HepG2 (cell line): ENCODE measurements at regions of chr2 and their contacts with region 1.

Region 1: DNA sequence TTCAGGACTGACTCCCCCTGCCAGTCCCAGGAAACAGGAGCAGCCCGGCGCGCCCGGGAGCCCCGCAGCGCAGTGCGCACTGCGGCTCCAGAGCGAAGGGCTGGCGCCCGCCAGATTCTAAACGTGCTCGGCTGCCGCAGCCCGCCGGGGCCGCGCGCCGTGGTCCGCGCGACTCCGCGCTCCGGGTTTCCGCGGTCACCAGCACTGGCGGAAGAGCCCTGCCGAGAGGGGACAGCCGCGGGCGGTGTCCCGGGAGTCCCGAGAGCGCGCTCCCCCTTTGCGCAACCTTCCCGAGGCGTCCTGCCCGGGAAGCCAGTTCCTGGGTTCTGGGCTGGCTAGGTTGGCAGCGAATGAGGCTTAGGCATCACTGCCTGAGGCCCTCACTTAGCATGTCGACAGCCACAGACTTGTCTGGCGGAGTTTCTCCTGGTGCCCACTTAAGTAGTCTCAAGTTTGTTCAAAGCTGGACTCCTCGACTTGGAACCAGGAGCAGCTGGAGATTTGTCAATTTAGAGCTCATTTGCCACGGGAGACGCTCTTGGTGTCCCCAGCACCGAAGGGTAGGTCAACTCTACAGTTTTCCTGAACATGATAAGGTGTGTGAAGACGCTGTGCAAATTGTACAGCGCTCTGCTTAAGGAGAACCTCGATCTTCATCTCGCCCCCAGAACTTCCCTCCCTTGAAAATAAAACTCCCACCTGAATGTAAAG is 1.5 kb upstream of the VSNL1 start:
- DNase-seq: peak; percentile 83
- ATAC-seq: peak; percentile 80
- H3K4me3 ChIP-seq: peak overlapping the region; percentile 78 to 97 (median 83)
- H3K27ac ChIP-seq: peak overlapping the region; percentile 94
- H3K4me1 ChIP-seq: peaks cover 31% of the 10 kb centered on the region
- H3K27me3 ChIP-seq: peaks cover 0 to 3% of the 10 kb centered on the region in 2 experiments; a peak in 1 of 5 replicates
- CTCF ChIP-seq: peak; percentile 48
- EP300 ChIP-seq: 0 out of 4 replicates have a peak, but pooled peaks of 1 of the 2 experiments have one; percentile 18
- POLR2A ChIP-seq: peak; percentile 77 to 88
- RAD21 ChIP-seq: peak; percentile 82

Region 2: GRCh38 chr2:17479875-17480274 is 59.1 kb before region 1 on chr2:
- CTCF ChIA-PET with region 1: no interaction called
- POLR2A ChIA-PET with region 1: interaction called, 32 read pairs
- in situ Hi-C with region 1: no loop called
- intact Hi-C with region 1: loop called (anchors 1 kb)
- DNase-seq: peak; percentile 96
- ATAC-seq: peak; percentile 99
- H3K4me3 ChIP-seq: peak overlapping the region in 1 of 3 experiments; percentile 34; a peak in 1 of 6 replicates
- H3K27ac ChIP-seq: peak overlapping the region; percentile 61
- H3K4me1 ChIP-seq: peaks cover 47% of the 10 kb centered on the region
- H3K27me3 ChIP-seq: no peaks in the 10 kb centered on the region
- CTCF ChIP-seq: no peak
- EP300 ChIP-seq: peak in 1 of 2 experiments; percentile 95; a peak in 2 of 4 replicates
- POLR2A ChIP-seq: no peak
- RAD21 ChIP-seq: no peak

Region 3: DNA sequence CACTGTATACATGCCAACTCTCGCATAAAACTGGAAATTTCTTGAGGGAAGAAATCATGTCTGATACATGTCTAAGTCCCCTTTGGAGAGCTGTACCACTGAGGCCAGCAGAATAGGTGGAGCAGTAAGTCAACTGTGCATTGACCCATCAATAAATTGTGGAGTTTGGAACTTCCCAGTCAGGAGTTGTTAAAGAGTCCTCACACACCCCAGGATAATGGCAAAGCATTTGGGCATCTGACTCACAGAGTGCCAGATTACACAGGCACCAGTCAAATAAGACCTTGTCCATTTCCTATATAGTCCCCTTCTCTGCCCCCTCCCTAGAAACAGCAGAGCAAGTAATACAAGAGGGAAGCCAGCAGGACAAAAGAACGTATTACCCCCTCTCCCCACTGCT is 11.9 kb after region 1 on chr2:
- CTCF ChIA-PET with region 1: no interaction called
- POLR2A ChIA-PET with region 1: interaction called, 19 read pairs
- in situ Hi-C with region 1: no loop called
- intact Hi-C with region 1: no loop called
- DNase-seq: no peak
- ATAC-seq: no peak
- H3K4me3 ChIP-seq: no peak overlapping the region
- H3K27ac ChIP-seq: peak overlapping the region; percentile 2
- H3K4me1 ChIP-seq: peaks cover 81% of the 10 kb centered on the region
- H3K27me3 ChIP-seq: no peaks in the 10 kb centered on the region
- CTCF ChIP-seq: no peak
- EP300 ChIP-seq: no peak
- POLR2A ChIP-seq: no peak
- RAD21 ChIP-seq: no peak

Region 4: GRCh38 chr2:17573085-17573803 is 34.2 kb after region 1 on chr2:
- CTCF ChIA-PET with region 1: no interaction called
- POLR2A ChIA-PET with region 1: interaction called, 19 read pairs
- in situ Hi-C with region 1: no loop called
- intact Hi-C with region 1: loop called (anchors 1 kb)
- DNase-seq: peak; percentile 52
- ATAC-seq: peak; percentile 87
- H3K4me3 ChIP-seq: no peak overlapping the region
- H3K27ac ChIP-seq: no peak overlapping the region
- H3K4me1 ChIP-seq: peaks cover 40% of the 10 kb centered on the region
- H3K27me3 ChIP-seq: no peaks in the 10 kb centered on the region
- CTCF ChIP-seq: peak; percentile 68
- EP300 ChIP-seq: no peak
- POLR2A ChIP-seq: no peak
- RAD21 ChIP-seq: peak; percentile 66; the same call in 1 of the 2 replicates

Region 5: DNA sequence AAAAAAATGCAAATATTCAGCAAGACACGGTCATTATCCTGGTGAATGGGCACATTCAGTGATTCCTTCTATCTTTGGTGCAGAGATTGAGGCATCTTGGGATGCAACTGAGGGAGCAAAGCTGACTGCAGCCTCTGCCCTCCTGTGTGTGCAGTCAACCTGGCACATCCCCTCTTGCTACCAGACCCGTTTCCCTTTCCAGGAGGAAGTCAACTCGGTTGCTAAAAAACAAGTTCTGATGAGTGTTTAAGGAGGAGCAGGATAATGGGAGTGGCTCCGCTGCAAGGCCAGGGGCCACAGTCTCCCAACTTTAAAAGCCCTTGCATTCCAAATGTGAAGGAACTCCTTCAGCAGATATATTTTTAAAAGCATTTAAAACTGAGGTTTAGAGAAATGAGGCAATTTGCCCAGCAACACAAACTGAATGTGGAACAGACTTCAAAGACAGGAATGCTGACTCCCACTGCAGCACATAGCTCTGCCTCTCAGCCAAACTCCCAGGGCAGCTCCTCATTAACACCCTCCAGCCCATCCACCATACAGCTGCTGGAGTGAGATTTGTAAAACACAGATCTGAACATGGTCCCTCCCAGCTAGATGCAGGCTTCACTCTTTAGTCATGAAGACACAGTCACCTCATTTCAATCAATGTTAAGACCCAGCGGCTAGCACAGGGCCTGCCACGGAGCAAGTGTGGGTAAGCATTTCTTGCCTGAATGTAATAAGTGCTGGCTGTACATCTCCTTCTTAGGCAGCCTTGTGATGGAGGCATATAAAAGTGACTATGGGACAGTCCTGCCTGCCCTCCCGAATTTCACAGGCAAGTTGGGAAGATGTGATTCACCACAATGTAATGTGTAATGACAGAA is 55.8 kb after region 1 on chr2:
- CTCF ChIA-PET with region 1: no interaction called
- POLR2A ChIA-PET with region 1: interaction called, 23 read pairs
- in situ Hi-C with region 1: loop called (anchors 10 kb)
- intact Hi-C with region 1: loop called (anchors 1 kb)
- DNase-seq: peak; percentile 29
- ATAC-seq: peak; percentile 8; the same call in 1 of the 3 replicates
- H3K4me3 ChIP-seq: no peak overlapping the region
- H3K27ac ChIP-seq: peak overlapping the region; percentile 50
- H3K4me1 ChIP-seq: peaks cover 62% of the 10 kb centered on the region
- H3K27me3 ChIP-seq: no peaks in the 10 kb centered on the region
- CTCF ChIP-seq: no peak
- EP300 ChIP-seq: no peak
- POLR2A ChIP-seq: no peak
- RAD21 ChIP-seq: no peak

Region 6: DNA sequence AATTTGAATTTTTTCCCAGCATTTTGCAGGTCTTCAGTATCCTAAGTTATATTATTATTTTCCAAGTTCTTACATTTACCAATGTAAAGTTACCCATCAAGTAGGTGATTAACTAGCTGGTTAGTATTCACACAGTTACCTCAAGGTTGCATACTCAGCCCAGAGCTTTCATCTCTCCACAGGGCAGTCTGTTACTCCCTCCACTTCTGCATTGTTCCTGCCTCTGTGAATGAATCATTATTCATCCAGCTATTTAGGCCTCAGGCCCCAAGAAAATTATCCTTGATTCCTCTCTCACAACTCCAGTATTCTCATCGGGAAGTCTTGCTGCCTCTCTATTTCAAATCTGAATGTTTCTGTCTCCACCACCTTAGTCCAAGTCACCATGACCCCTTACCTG is 122.5 kb after region 1 on chr2:
- CTCF ChIA-PET with region 1: no interaction called
- POLR2A ChIA-PET with region 1: no interaction called
- in situ Hi-C with region 1: no loop called
- intact Hi-C with region 1: no loop called
- DNase-seq: no peak
- ATAC-seq: no peak
- H3K4me3 ChIP-seq: no peak overlapping the region
- H3K27ac ChIP-seq: no peak overlapping the region
- H3K4me1 ChIP-seq: no peaks in the 10 kb centered on the region
- H3K27me3 ChIP-seq: no peaks in the 10 kb centered on the region
- CTCF ChIP-seq: no peak
- EP300 ChIP-seq: no peak
- POLR2A ChIP-seq: no peak
- RAD21 ChIP-seq: no peak

Region 7: GRCh38 chr2:17672583-17673317 is 133.8 kb after region 1 on chr2:
- CTCF ChIA-PET with region 1: no interaction called
- POLR2A ChIA-PET with region 1: interaction called, 4 read pairs
- in situ Hi-C with region 1: no loop called
- intact Hi-C with region 1: loop called (anchors 1 kb)
- DNase-seq: no peak
- ATAC-seq: no peak; the same call in 2 of the 3 replicates
- H3K4me3 ChIP-seq: no peak overlapping the region
- H3K27ac ChIP-seq: no peak overlapping the region
- H3K4me1 ChIP-seq: no peaks in the 10 kb centered on the region
- H3K27me3 ChIP-seq: no peaks in the 10 kb centered on the region
- CTCF ChIP-seq: no peak
- EP300 ChIP-seq: no peak
- POLR2A ChIP-seq: no peak
- RAD21 ChIP-seq: no peak